Activated T-helper 1 cell treated with anti-CD3 and anti-CD28 coated beads, Interleukin-12 subunit alpha, Interleukin-12 subunit beta, Interleukin-2, Interleukin-4 antibody, amounts not matched to agents 30 ng/mL and 10 ng/mL and 1 ng/mL, durations not matched to agents 14 hours and 24 hours and 36 hours (primary cell): ENCODE measurements at regions of chr14 and their contacts with region 1.

Region 1: GRCh38 chr14:54893151-54893760 is 9.4 kb downstream of the GCH1 start:
- DNase-seq: no peak
- H3K4me3 Mint-ChIP-seq: no peak overlapping the region
- H3K27ac Mint-ChIP-seq: peak overlapping the region; percentile 36
- H3K4me1 Mint-ChIP-seq: peaks cover 55% of the 10 kb centered on the region
- H3K27me3 Mint-ChIP-seq: no peaks in the 10 kb centered on the region

Region 2: DNA sequence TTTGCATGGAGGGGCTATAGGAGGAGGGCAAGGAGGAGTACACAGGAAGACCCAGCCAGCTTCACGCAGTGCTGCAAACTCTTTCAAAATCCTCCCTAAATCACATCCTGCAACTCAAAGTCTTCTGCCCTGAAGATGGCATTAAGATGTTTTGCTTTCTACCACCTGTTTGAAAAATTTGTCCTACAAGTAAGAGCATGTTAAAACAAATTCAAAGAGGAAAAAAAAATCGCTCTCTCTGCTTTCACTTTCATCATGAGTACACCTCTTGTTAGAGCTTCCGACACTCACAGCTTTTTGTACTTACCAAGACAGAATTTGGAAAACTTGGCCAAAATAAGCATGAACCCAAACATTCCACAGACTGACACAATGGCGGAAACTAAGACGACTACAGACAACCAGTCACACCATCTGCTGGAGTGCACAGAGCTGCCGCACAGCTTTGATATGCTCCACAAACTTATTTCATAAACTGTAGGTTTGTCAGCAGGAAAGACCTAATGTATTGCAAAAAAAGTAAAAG is 12.0 kb before region 1 on chr14:
- intact Hi-C with region 1: loop called (anchors 1 kb)
- DNase-seq: peak; percentile 30
- H3K4me3 Mint-ChIP-seq: peak overlapping the region; percentile 86
- H3K27ac Mint-ChIP-seq: peak overlapping the region; percentile 94
- H3K4me1 Mint-ChIP-seq: peaks cover 53% of the 10 kb centered on the region
- H3K27me3 Mint-ChIP-seq: no peaks in the 10 kb centered on the region